Activated T-helper 1 cell treated with anti-CD3 and anti-CD28 coated beads, Interleukin-12 subunit alpha, Interleukin-12 subunit beta, Interleukin-2, Interleukin-4 antibody, amounts not matched to agents 30 ng/mL and 10 ng/mL and 1 ng/mL, durations not matched to agents 14 hours and 24 hours and 36 hours (primary cell): ENCODE measurements at regions of chr14 and their contacts with region 1.

Region 1: DNA sequence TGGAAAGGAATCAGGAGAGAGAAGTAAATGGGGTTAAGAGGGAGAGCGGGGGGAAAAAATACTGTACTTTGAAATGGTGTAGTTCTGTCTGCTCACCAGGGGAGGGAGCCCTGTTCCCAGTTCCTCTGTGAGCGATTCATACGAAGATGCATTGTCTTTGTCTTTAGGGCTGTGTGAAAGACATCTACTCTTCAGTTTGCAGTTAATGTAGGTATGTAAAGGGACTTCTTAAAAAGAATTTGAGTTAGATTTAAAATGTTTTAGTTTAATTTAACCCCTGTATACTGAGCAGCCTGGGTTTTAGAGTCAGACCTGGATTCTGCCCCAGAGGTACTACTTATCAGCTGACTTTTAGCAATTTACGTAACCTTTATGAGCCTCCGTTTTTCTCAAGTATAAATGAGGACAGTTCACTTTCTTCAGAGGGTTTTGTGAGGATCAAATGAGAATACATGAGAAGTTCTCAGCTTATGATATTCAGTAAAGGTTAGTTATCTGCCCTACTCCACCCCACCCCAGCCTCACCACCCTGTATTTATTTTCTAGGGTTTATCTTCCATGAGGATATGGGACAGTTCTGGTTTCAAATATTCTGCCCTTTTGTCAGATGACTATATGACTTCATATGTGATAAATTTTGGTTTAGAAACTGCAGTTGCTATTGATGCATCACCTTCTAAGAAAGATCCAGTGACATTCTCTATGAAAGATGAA is 82.5 kb upstream of the EVL start:
- DNase-seq: peak; percentile 36
- H3K4me3 Mint-ChIP-seq: no peak overlapping the region
- H3K27ac Mint-ChIP-seq: no peak overlapping the region
- H3K4me1 Mint-ChIP-seq: peaks cover 25% of the 10 kb centered on the region
- H3K27me3 Mint-ChIP-seq: no peaks in the 10 kb centered on the region

Region 2: GRCh38 chr14:98622208-98623051 is 1360.3 kb before region 1 on chr14:
- intact Hi-C with region 1: no loop called
- DNase-seq: no peak
- H3K4me3 Mint-ChIP-seq: no peak overlapping the region
- H3K27ac Mint-ChIP-seq: no peak overlapping the region
- H3K4me1 Mint-ChIP-seq: no peaks in the 10 kb centered on the region
- H3K27me3 Mint-ChIP-seq: peaks cover 2% of the 10 kb centered on the region

Region 3: DNA sequence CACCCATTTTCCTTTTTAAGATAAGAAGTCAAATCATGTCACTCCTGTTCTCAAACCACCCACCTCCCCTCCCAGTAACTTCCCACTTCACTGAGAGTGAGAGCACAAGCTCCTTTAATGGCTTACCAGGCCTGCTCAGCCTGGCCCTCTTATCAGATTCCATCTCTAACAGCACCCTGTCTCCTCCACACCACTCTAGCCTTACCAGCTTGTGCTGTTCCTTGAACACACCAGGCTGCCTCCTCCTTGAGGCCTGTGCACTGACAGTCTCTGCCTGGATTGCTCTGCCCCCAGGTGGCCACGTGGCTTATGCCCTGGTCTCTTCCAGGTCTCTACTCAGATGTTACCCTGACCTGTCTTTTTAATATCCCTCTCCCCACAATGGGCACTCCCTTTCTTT is 42.4 kb after region 1 on chr14:
- intact Hi-C with region 1: loop called (anchors 1 kb)
- DNase-seq: no peak
- H3K4me3 Mint-ChIP-seq: no peak overlapping the region
- H3K27ac Mint-ChIP-seq: peak overlapping the region; percentile 14
- H3K4me1 Mint-ChIP-seq: peaks cover 10% of the 10 kb centered on the region
- H3K27me3 Mint-ChIP-seq: peaks cover 1% of the 10 kb centered on the region

Region 4: DNA sequence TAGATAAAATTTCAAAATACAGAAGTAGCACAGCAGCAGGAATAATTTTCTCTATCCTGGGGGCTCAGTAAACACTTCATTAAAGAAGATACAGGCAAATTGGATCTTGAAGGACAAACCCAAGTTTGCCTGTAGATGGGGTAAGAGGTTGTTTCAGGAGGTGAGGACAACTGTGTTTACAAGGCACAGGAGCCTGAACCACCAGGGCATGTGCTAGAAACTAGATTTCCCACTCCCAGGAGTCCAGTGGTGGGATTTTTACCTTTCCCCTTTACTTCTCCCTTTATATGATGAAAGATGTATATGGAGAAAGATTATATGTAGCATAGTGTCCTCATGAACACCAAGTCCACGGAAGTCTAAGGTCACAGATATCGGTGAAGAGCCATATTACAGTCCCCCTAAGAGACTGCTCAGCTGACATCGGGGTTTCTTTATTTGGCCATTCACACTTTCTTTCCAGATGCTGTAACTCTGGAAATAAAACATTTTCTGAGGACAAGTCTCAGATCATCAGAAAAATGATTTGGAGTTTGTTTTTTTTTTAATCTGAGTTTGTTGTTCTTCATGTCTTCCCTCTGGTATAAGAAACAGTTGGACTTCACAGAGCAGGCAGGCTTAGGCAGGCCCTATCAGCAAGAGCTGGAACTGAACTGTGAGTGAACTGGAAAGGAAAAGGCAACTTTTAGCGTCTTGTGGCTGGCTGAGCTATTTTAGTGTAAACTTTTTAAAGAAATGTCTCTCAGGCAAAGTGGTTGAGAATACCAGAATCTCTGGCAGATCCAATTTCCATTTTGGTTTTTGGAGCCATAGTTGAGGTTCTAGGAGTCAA is 74.5 kb after region 1 on chr14:
- intact Hi-C with region 1: loop called (anchors 2 kb)
- DNase-seq: no peak
- H3K4me3 Mint-ChIP-seq: peak overlapping the region; percentile 62
- H3K27ac Mint-ChIP-seq: peak overlapping the region; percentile 75
- H3K4me1 Mint-ChIP-seq: peaks cover 69% of the 10 kb centered on the region
- H3K27me3 Mint-ChIP-seq: no peaks in the 10 kb centered on the region

Region 5: GRCh38 chr14:100155042-100155846 is 172.6 kb after region 1 on chr14:
- intact Hi-C with region 1: loop called (anchors 2 kb)
- DNase-seq: no peak
- H3K4me3 Mint-ChIP-seq: no peak overlapping the region
- H3K27ac Mint-ChIP-seq: no peak overlapping the region
- H3K4me1 Mint-ChIP-seq: no peaks in the 10 kb centered on the region
- H3K27me3 Mint-ChIP-seq: peaks cover 22% of the 10 kb centered on the region